Posterior vena cava (tissue), 2 donors: ENCODE measurements at regions of chr19 and their contacts with region 1.

Region 1: GRCh38 chr19:38693380-38694223 is 46.2 kb downstream of the ACTN4 start:
- DNase-seq: no peak

Region 2: GRCh38 chr19:38658462-38659306 is 34.9 kb before region 1 on chr19:
- intact Hi-C with region 1: loop called (anchors 5 kb)
- DNase-seq: no peak

Region 3: GRCh38 chr19:38707512-38708114 is 14.0 kb after region 1 on chr19:
- intact Hi-C with region 1: no loop called
- DNase-seq: no peak

Region 4: DNA sequence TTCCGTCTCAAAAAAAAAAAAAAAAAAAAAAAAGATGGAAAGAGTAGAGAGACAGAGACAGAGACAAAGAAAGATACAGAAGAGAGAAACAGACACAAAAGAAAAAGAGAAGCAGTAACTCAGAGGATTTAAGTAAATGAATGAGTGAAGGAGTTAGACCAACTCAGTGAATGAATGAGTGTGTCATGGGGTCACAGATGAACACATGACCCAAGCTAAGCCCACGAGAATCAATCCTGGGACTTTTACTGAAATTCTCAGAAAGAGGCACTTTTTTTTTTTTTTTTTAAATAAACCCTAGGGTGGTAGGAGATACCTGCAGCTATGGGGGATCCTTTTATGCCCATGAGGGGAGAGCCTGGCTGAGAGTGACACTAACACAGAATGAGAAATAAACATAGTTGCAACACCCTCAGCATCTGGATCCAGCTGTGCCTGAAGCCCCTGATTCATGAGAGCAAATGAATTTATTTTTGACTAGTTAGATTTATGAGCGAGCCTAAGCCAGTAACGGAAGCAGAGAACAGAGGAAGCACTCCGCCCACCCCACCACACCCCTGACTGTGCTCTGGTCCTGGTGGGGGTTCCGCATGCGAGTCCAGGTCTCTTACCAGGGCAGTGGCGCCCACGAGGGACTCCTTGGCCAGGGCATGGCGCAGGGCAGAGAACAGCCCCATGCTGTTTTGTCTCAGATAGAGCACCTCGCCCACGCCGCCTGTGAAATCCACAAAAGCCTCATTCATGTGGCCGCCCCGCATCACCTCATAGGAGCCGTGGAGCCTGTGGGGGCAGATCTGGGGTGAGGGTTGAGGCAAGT is 46.0 kb after region 1 on chr19:
- intact Hi-C with region 1: no loop called
- DNase-seq: peak; percentile 78